ENCODE measurements at regions of chr11 and their contacts with region 1.

Region 1: GRCh38 chr11:10792398-10792975 is 16.2 kb downstream of the EIF4G2 start:
- DNase-seq: peak; percentile 86
- H3K4me3 ChIP-seq: peak overlapping the region; percentile 55
- H3K27ac ChIP-seq: no peak overlapping the region
- H3K4me1 ChIP-seq: 0 out of 2 replicates have a peak, but pooled peaks cover 4% of the 10 kb centered on the region
- H3K27me3 ChIP-seq: no peaks in the 10 kb centered on the region

Region 2: GRCh38 chr11:11022125-11022730 is 229.7 kb after region 1 on chr11:
- in situ Hi-C with region 1: loop called (anchors 5 kb)
- DNase-seq: peak; percentile 48
- H3K4me3 ChIP-seq: no peak overlapping the region
- H3K27ac ChIP-seq: no peak overlapping the region
- H3K4me1 ChIP-seq: peaks cover 12% of the 10 kb centered on the region
- H3K27me3 ChIP-seq: no peaks in the 10 kb centered on the region

Region 3: DNA sequence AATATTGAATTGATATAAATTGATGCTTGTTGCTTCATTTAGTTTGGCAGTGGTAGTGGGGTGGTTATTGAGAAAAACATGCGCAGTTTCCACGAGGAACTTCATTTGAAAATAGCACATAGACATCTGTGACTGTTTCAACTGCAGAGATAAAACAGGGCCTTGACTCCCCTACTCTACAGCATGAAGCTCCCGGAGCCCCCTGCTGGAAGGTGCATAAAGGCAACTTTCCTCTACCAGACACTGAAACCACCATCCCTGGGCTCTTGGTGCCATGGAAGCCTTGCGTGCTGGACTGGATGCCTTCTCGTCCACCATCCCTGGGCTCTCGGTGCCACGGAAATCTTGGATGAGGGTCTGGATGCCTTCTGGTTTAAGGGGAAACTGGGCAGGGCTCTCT is 364.7 kb after region 1 on chr11:
- in situ Hi-C with region 1: loop called (anchors 25 kb)
- DNase-seq: peak; percentile 67
- H3K4me3 ChIP-seq: no peak overlapping the region
- H3K27ac ChIP-seq: no peak overlapping the region
- H3K4me1 ChIP-seq: no peaks in the 10 kb centered on the region
- H3K27me3 ChIP-seq: peaks cover under 1% of the 10 kb centered on the region; the same call in 1 of the 2 replicates

Region 4: DNA sequence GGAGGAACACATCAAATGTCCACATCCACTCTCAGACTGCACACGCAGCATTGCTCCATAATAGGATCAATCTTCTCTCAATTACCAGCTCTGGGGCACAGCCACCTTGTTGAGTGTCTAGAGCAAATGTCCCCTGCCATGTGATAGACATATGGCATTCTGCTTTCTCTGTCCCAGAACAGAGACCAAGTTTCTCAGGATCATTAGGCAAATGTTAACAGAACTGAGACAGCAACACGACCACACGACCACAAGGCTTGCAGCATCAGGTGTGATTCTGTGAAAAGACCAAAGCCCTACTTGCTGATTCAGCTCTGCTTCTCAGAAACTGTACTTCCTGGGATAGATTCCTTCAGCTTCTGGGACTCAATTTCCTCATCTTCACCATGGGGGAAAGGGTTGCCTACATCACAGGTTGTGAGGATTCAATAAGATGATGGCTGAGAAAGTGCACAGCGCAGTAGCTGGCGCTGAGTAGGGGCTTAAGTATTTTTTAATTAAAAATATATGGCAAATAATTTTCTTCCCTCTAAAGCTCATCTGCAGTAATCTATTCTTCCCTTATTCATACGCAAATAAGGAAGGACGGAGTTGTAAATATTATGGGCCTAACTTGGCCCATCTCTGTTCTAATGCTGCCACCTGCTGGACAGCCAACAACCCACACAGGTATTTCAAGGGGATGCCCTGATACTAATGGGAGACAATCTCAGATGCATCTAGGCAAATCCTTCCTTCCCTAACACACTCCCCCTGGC is 995.0 kb after region 1 on chr11:
- in situ Hi-C with region 1: loop called (anchors 25 kb)
- DNase-seq: peak; percentile 78
- H3K4me3 ChIP-seq: no peak overlapping the region
- H3K27ac ChIP-seq: no peak overlapping the region
- H3K4me1 ChIP-seq: no peaks in the 10 kb centered on the region
- H3K27me3 ChIP-seq: peaks cover 6% of the 10 kb centered on the region